ENCODE measurements at regions of chr6 and their contacts with region 1.

Region 1: DNA sequence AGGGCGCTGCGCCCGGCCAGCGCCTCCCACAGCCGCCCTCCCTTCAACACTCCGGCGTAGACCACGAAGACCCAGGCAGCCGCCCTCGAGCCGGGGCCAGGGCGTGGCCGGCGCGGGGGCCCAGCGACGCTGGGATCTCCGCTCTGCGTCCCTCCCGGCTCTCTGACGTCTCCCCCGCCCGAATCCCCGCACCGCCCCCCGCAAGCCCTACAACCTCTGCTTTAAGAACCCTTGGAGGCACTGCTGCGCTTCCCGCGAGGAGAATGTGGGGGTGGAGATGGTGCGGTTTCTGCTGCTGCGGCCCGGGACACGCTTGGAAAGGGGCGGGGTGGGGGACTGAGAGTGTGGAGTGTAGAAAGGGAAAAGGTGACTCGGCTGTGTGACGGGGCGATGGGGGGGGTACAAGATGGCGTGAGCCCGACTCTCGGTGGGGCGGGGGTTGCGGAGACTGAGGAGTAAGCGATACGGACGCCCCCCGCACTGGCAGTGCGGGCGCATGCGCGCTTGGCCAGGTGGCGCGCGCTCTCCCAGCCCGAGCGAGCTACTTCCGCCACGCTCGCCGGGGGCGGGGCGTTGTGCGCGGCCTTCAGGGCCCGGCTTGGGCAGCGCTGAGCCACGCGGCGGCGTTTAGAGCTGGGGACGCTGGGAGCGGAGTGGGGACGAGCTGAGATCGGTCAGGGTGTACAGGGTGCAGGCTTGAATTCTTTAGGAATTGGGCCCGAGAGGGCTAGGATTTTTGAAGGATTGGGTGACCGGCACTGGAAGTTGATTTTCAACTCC is at the start of gene SUPT3H:
- DNase-seq: peak; percentile 81 to 96 (median 88)
- ATAC-seq: peak; percentile 84 to 88 (median 87)
- H3K4me3 ChIP-seq: peak within 1 kb of the TSS; percentile 91 to 93
- H3K4me3 Mint-ChIP-seq: peak within 1 kb of the TSS; percentile 89 to 98 (median 98)
- H3K27ac ChIP-seq: peak within 1 kb of the TSS; percentile 97
- H3K27ac Mint-ChIP-seq: peak within 1 kb of the TSS; percentile 92 to 96
- H3K4me1 ChIP-seq: peaks cover 4 to 8% of the 10 kb centered on the region in 2 experiments
- H3K4me1 Mint-ChIP-seq: peaks cover 23 to 26% (median 25%) of the 10 kb centered on the region in 3 donors
- H3K27me3 ChIP-seq: no peaks in the 10 kb centered on the region
- H3K27me3 Mint-ChIP-seq: no peaks in the 10 kb centered on the region
- total RNA-seq, gene SUPT3H: 9.3 to 12.9 (median 10.7) TPM

Region 2: GRCh38 chr6:45301348-45302142 is 76.2 kb before region 1 on chr6:
- CTCF ChIA-PET with region 1: no interaction called
- POLR2A ChIA-PET with region 1: interaction called in 1 of 2 experiments, 10 read pairs
- DNase-seq: no peak
- ATAC-seq: no peak
- H3K4me3 ChIP-seq: no peak overlapping the region
- H3K4me3 Mint-ChIP-seq: no peak overlapping the region
- H3K27ac ChIP-seq: no peak overlapping the region
- H3K27ac Mint-ChIP-seq: no peak overlapping the region
- H3K4me1 ChIP-seq: no peaks in the 10 kb centered on the region
- H3K4me1 Mint-ChIP-seq: peaks cover 0 to 32% (median 13%) of the 10 kb centered on the region in 3 donors
- H3K27me3 ChIP-seq: no peaks in the 10 kb centered on the region
- H3K27me3 Mint-ChIP-seq: no peaks in the 10 kb centered on the region

Region 3: GRCh38 chr6:45421709-45422502 is 44.2 kb after region 1 on chr6:
- CTCF ChIA-PET with region 1: interaction called in 1 of 2 experiments, 3 read pairs
- POLR2A ChIA-PET with region 1: interaction called in 1 of 2 experiments, 12 read pairs
- DNase-seq: peak in 25 of 35 experiments; percentile 12 to 68 (median 34)
- ATAC-seq: peak; percentile 42 to 54 (median 53)
- H3K4me3 ChIP-seq: peak overlapping the region; percentile 67 to 87
- H3K4me3 Mint-ChIP-seq: peak overlapping the region; percentile 90 to 95 (median 94)
- H3K27ac ChIP-seq: peak overlapping the region; percentile 58
- H3K27ac Mint-ChIP-seq: peak overlapping the region; percentile 91 to 93
- H3K4me1 ChIP-seq: peaks cover 15 to 44% of the 10 kb centered on the region in 2 experiments
- H3K4me1 Mint-ChIP-seq: peaks cover 31 to 49% (median 41%) of the 10 kb centered on the region in 3 donors
- H3K27me3 ChIP-seq: peaks cover 0 to 31% of the 10 kb centered on the region in 2 experiments
- H3K27me3 Mint-ChIP-seq: peaks cover 15 to 23% of the 10 kb centered on the region in 2 donors

Region 4: DNA sequence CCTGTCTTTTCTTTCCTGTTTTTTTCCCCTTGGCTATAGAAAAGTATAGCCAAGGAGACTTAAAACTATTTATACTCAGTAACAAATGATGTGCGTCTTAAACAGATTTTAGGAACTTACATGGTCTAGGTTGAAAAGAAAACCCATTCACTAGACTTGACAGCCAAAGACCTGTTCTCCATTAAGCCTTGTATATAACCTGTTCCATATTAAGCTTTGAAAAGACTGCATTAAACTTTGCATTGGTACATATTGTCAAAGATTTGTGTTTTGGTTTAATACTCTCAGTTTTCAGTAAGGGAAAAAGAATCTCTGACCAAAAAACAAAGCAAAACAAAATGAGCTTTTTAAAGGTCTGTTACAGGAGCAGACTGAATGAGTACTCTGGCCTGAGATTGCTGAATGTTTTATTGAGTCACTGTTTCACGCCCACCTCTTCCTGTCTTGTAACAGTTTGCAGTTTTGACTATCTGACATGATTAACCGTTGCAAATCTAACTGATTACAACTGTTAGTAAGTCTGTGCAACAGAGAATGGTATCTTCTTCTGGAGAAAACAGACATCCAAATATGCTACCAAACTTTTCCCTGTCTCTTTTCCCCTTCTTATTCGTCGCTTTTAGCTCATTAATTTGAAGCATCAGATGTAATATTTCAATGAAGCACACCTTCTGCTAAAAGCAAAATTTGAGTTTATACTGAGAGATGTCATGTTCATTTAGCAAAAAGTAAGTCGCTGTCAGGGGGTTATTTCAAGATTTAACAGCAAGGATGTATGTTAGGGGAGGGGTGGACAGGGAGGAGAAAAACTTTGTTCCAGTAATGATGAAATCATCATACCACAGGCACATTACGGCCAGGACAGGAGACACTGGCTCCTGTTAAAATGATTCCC is 59.0 kb after region 1 on chr6:
- CTCF ChIA-PET with region 1: no interaction called
- POLR2A ChIA-PET with region 1: no interaction called
- DNase-seq: peak in 1 of 35 experiments; percentile 43
- ATAC-seq: peak; percentile 71 to 83 (median 78)
- H3K4me3 ChIP-seq: no peak overlapping the region
- H3K4me3 Mint-ChIP-seq: peak overlapping the region in 2 of 3 donors; percentile 14 to 34
- H3K27ac ChIP-seq: peak overlapping the region; percentile 30
- H3K27ac Mint-ChIP-seq: peak overlapping the region; percentile 26 to 77
- H3K4me1 ChIP-seq: peaks cover 13 to 26% of the 10 kb centered on the region in 2 experiments
- H3K4me1 Mint-ChIP-seq: peaks cover 55 to 78% (median 76%) of the 10 kb centered on the region in 3 donors
- H3K27me3 ChIP-seq: no peaks in the 10 kb centered on the region
- H3K27me3 Mint-ChIP-seq: peaks cover 0 to 3% of the 10 kb centered on the region in 2 donors